Activated CD4-positive, alpha-beta T cell treated with anti-CD3 and anti-CD28 coated beads, Interleukin-2, amount 10 ng/mL, durations not matched to agents 24 days and 14 days (primary cell): ENCODE measurements at regions of chr6 and their contacts with region 1.

Region 1: GRCh38 chr6:6659600-6660327 is 71.2 kb downstream of the LY86 start:
- DNase-seq: peak; percentile 70
- H3K4me3 Mint-ChIP-seq: peak overlapping the region; percentile 31
- H3K27ac Mint-ChIP-seq: peak overlapping the region; percentile 99
- H3K4me1 Mint-ChIP-seq: peaks cover 74% of the 10 kb centered on the region
- H3K27me3 Mint-ChIP-seq: no peaks in the 10 kb centered on the region

Region 2: GRCh38 chr6:6560909-6561308 is 98.9 kb before region 1 on chr6:
- intact Hi-C with region 1: loop called (anchors 5 kb)
- DNase-seq: peak; percentile 37
- H3K4me3 Mint-ChIP-seq: no peak overlapping the region
- H3K27ac Mint-ChIP-seq: no peak overlapping the region
- H3K4me1 Mint-ChIP-seq: peaks cover 55% of the 10 kb centered on the region
- H3K27me3 Mint-ChIP-seq: peaks cover 9% of the 10 kb centered on the region

Region 3: DNA sequence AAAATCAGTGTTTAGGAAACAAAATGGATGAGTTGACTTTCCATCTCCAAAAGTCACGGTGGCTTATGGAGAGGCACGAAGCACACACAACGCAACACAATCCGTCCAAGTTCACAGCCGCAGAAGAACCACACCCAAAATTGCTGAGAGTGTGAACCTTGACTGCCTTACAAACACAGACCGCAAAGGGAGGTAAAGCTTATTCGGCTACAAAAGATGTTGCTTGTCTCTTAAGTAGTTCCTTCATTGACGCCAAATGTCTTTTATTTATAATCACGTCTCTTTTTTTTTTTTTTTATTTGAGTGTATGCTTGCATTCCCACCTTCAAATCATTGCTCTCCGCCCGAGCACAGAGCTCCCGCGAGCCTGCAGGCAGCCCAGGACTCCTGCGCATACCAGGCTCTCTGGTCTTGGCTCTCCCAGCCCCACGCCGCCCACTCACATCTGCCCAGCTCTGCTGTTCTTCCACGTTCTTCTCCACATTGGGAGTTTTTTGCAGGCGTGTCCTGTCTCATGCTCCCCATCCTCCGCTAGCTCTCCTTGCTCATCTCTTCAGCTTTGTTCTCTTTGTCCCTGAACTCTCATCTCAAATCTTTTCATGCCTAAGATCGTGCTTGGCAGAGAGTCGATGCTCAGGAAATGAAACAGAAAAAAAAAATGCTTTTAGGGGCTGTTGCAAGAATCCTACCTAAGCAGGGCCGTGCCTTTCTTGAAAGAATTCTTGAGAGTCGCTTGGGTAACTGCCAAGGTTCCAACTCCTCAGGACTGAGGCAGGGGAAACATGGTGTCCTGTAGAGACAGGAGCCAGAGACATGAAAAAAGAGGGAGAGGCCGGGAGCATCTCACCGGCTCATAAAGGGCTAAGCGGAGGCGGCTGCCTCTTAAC is 45.4 kb before region 1 on chr6:
- intact Hi-C with region 1: loop called (anchors 1 kb)
- DNase-seq: peak; percentile 85
- H3K4me3 Mint-ChIP-seq: peak overlapping the region; percentile 81
- H3K27ac Mint-ChIP-seq: peak overlapping the region; percentile 86
- H3K4me1 Mint-ChIP-seq: peaks cover 68% of the 10 kb centered on the region
- H3K27me3 Mint-ChIP-seq: no peaks in the 10 kb centered on the region

Region 4: GRCh38 chr6:6683969-6684833 is 24.4 kb after region 1 on chr6:
- intact Hi-C with region 1: loop called (anchors 2 kb)
- DNase-seq: peak; percentile 72
- H3K4me3 Mint-ChIP-seq: peak overlapping the region; percentile 15
- H3K27ac Mint-ChIP-seq: peak overlapping the region; percentile 2
- H3K4me1 Mint-ChIP-seq: peaks cover 49% of the 10 kb centered on the region
- H3K27me3 Mint-ChIP-seq: peaks cover 2% of the 10 kb centered on the region